Posterior vena cava (tissue), 2 donors: ENCODE measurements at regions of chr2 and their contacts with region 1.

Region 1: DNA sequence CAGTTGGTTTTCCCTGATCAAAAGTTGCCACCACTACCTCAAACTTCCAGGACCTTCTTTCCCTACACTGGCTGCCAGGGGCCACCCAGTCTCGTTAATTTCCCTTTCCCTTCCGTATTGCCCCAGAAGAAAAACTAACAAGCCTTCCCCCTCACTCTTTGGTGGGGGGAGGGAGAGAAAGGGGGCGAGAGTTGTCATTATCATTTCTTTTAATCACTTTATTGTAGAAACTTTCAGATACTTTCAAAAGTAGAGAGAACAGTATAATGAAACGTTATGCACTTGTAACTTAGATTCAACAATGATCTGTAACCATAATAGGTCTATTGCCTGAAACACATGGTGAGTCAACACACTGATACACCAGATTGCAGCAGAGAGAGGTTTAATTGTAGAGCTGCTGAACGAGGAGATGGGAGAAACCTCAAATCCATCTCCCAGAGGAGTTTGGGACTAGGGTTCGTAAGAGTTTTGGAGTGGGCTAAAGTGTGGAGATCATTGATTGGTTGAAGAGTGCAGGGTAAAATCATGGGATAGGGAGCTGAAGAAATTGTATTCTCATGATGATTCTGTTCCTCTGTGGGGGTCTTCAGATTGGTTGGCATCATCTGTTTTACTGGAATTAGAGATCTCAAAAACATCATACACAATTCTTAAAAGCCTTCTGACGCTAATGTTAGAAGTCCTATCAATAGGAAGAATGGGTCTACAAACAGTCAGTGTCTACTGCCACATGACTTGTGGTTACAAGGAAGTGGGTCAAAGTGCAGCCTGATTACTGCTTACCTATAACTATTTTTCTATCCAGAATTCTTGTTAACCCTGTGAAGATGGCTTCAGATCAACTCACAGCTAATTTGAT is 2.6 kb upstream of the RNF149 start:
- DNase-seq: no peak

Region 2: GRCh38 chr2:101113396-101114267 is 197.4 kb before region 1 on chr2:
- intact Hi-C with region 1: no loop called
- DNase-seq: no peak

Region 3: GRCh38 chr2:101238930-101239759 is 71.9 kb before region 1 on chr2:
- intact Hi-C with region 1: loop called in 1 of 2 experiments (anchors 2 kb)
- DNase-seq: no peak